Naive thymus-derived CD4-positive, alpha-beta T cell (primary cell): ENCODE measurements at regions of chr19 and their contacts with region 1.

Region 1: DNA sequence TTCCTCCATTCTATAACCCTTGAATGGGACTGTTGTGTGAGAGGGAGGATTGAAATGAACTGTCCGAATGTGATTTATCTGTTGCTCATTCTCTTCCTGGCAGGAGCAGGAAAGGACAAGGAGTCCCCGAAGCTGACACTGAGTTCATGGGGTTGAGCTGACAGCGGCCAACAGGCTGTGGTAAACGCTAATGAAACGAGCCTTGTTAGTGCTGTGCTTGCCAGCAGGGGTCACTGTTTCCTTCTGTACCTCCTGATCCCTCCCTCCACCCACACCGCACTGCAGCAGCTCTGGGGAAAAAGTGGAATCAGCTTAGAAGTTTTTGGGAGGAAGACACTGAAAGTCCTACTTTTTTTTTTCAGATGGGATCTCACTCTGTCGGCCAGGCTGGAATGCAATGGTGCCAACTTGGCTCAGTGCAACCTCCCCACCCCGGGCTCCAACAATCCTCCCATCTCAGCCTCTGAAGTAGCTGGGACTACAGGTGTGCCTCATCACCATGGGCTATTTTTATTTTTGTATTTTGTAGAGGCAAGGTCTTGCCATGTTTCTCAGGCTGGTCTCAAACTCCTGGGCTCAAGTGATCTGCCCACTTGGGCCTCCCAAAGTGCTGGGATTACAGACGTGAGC is 6.7 kb upstream of the ZNF761 start:
- DNase-seq: peak; percentile 31 to 70 (median 54)
- ATAC-seq: peak; percentile 96
- H3K4me3 ChIP-seq: no peak overlapping the region
- H3K4me3 Mint-ChIP-seq: no peak overlapping the region
- H3K27ac ChIP-seq: no peak overlapping the region
- H3K27ac Mint-ChIP-seq: no peak overlapping the region
- H3K4me1 ChIP-seq: no peaks in the 10 kb centered on the region
- H3K4me1 Mint-ChIP-seq: peaks cover 0 to 13% (median 2%) of the 10 kb centered on the region in 7 donors
- H3K27me3 ChIP-seq: no peaks in the 10 kb centered on the region
- H3K27me3 Mint-ChIP-seq: peaks cover 0 to 4% (median 0%) of the 10 kb centered on the region in 5 donors

Region 2: DNA sequence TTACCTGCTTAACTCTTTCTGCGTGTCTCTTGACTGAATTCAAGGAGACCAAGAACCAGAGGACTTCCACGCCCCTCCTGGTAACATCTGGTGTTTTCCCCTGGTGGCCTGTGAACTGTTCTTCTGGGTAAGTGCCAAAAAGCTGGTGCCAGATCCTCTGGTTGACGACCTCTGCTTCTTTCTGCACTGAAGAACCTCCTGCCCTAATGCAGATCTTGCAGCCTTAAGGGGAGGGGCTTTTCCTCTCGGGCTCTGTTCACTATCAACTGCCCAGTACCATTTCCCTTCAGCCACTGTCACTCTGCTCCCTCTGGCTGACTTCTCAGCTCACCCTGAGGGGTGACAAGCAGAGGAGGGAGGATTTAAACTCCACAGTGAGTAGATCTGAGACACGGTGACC is 417.5 kb before region 1 on chr19:
- CTCF ChIA-PET with region 1: no interaction called
- POLR2A ChIA-PET with region 1: no interaction called
- intact Hi-C with region 1: no loop called
- DNase-seq: no peak
- ATAC-seq: no peak
- H3K4me3 ChIP-seq: no peak overlapping the region
- H3K4me3 Mint-ChIP-seq: no peak overlapping the region
- H3K27ac ChIP-seq: no peak overlapping the region
- H3K27ac Mint-ChIP-seq: no peak overlapping the region
- H3K4me1 ChIP-seq: no peaks in the 10 kb centered on the region
- H3K4me1 Mint-ChIP-seq: no peaks in the 10 kb centered on the region
- H3K27me3 ChIP-seq: no peaks in the 10 kb centered on the region
- H3K27me3 Mint-ChIP-seq: peaks cover 0 to 8% (median 0%) of the 10 kb centered on the region in 5 donors

Region 3: GRCh38 chr19:53357821-53358581 is 67.1 kb before region 1 on chr19:
- CTCF ChIA-PET with region 1: no interaction called
- POLR2A ChIA-PET with region 1: no interaction called
- intact Hi-C with region 1: no loop called
- DNase-seq: no peak
- ATAC-seq: no peak
- H3K4me3 ChIP-seq: no peak overlapping the region
- H3K4me3 Mint-ChIP-seq: no peak overlapping the region
- H3K27ac ChIP-seq: no peak overlapping the region
- H3K27ac Mint-ChIP-seq: no peak overlapping the region
- H3K4me1 ChIP-seq: no peaks in the 10 kb centered on the region
- H3K4me1 Mint-ChIP-seq: peaks cover 0 to 5% (median 0%) of the 10 kb centered on the region in 7 donors
- H3K27me3 ChIP-seq: no peaks in the 10 kb centered on the region
- H3K27me3 Mint-ChIP-seq: no peaks in the 10 kb centered on the region

Region 4: DNA sequence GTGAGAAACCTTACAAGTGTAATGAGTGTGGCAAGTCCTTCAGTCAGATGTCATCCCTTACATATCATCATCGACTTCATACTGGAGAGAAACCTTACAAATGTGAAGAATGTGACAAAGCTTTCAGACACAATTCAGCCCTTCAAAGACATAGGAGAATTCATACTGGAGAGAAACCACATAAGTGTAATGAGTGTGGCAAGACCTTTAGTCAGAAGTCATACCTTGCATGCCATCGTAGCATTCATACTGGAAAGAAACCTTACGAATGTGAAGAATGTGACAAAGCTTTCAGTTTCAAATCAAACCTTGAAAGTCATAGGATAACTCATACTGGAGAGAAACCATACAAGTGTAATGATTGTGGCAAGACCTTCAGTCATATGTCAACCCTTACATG is 43.7 kb before region 1 on chr19:
- CTCF ChIA-PET with region 1: no interaction called
- POLR2A ChIA-PET with region 1: no interaction called
- intact Hi-C with region 1: no loop called
- DNase-seq: no peak
- ATAC-seq: no peak
- H3K4me3 ChIP-seq: no peak overlapping the region
- H3K4me3 Mint-ChIP-seq: no peak overlapping the region
- H3K27ac ChIP-seq: no peak overlapping the region
- H3K27ac Mint-ChIP-seq: no peak overlapping the region
- H3K4me1 ChIP-seq: no peaks in the 10 kb centered on the region
- H3K4me1 Mint-ChIP-seq: peaks cover 0 to 4% (median 0%) of the 10 kb centered on the region in 7 donors
- H3K27me3 ChIP-seq: no peaks in the 10 kb centered on the region
- H3K27me3 Mint-ChIP-seq: no peaks in the 10 kb centered on the region

Region 5: DNA sequence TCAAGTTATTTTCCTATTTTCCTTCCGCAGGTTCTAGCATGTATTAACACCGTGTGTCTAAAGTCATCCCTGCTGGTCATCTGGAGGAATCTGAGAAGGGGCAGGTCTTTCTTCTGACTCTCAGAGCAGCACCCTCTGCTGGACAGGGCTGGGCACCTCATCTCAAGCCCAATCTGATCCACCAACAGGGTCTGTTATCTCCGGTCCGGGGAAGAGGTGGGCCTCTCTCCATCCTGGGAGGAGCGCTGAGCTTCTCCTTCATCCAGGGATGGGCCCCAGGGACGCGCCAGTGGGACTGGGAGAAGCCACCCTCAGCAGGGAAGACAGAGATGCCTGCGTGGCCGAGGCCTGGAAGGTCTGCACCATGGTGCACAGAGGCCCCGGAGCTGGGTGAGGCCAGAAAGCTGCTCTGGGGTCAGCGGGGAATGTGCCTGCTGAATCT is 86.9 kb after region 1 on chr19:
- CTCF ChIA-PET with region 1: interaction called, 10 read pairs
- POLR2A ChIA-PET with region 1: no interaction called
- intact Hi-C with region 1: loop called (anchors 1 kb)
- DNase-seq: peak; percentile 7 to 47 (median 35)
- ATAC-seq: peak; percentile 84
- H3K4me3 ChIP-seq: no peak overlapping the region
- H3K4me3 Mint-ChIP-seq: no peak overlapping the region
- H3K27ac ChIP-seq: no peak overlapping the region
- H3K27ac Mint-ChIP-seq: no peak overlapping the region
- H3K4me1 ChIP-seq: no peaks in the 10 kb centered on the region
- H3K4me1 Mint-ChIP-seq: peaks cover 0 to 3% (median 0%) of the 10 kb centered on the region in 7 donors
- H3K27me3 ChIP-seq: no peaks in the 10 kb centered on the region
- H3K27me3 Mint-ChIP-seq: peaks cover 0 to 8% (median 5%) of the 10 kb centered on the region in 5 donors